WTC11 (cell line): ENCODE measurements at regions of chr9 and their contacts with region 1.

Region 1: GRCh38 chr9:72022841-72023240 is 37.6 kb downstream of the C9orf57 start:
- DNase-seq: no peak
- ATAC-seq: no peak
- H3K4me3 Mint-ChIP-seq: no peak overlapping the region
- H3K27ac Mint-ChIP-seq: no peak overlapping the region
- H3K4me1 Mint-ChIP-seq: peaks cover 12% of the 10 kb centered on the region
- H3K27me3 Mint-ChIP-seq: no peaks in the 10 kb centered on the region
- CTCF ChIP-seq: no peak

Region 2: GRCh38 chr9:71806901-71807307 is 215.9 kb before region 1 on chr9:
- CTCF ChIA-PET with region 1: interaction called, 43 read pairs
- POLR2A ChIA-PET with region 1: interaction called, 3 read pairs
- DNase-seq: peak; percentile 57
- ATAC-seq: peak; percentile 100
- H3K4me3 Mint-ChIP-seq: no peak overlapping the region
- H3K27ac Mint-ChIP-seq: peak overlapping the region; percentile 58
- H3K4me1 Mint-ChIP-seq: peaks cover 17% of the 10 kb centered on the region
- H3K27me3 Mint-ChIP-seq: no peaks in the 10 kb centered on the region
- CTCF ChIP-seq: 0 out of 2 replicates have a peak, but pooled peaks have one; percentile 43

Region 3: DNA sequence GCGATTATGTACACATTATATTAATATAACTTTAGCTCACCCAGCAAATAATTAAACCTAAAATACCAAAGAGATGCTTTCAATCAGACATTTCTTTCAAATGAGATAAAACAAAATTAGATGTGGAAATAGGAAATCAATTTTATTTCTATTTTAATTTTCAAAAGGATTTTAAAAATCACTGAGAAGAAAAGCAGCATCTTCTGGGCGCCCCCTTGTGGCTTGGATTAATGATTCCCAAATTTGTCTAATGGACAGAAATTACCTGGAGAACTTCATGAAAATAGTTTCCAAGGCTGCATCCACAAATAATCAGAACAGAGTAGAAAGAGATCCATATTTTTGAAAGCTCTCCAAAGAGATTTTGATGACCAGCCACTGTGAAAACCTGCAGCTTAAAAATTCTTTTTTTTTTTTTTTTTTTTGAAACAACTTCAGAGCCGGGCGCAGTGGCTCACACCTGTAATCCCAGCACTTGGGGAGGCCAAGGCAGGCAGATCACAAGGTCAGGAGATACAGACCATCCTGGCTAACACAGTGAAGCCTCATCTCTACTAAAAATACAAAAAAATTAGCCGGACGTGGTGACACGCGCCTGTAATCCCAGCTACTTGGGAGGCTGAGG is 203.6 kb before region 1 on chr9:
- CTCF ChIA-PET with region 1: interaction called, 13 read pairs
- POLR2A ChIA-PET with region 1: no interaction called
- DNase-seq: peak; percentile 23
- ATAC-seq: no peak
- H3K4me3 Mint-ChIP-seq: no peak overlapping the region
- H3K27ac Mint-ChIP-seq: no peak overlapping the region
- H3K4me1 Mint-ChIP-seq: peaks cover 44% of the 10 kb centered on the region
- H3K27me3 Mint-ChIP-seq: no peaks in the 10 kb centered on the region
- CTCF ChIP-seq: peak; percentile 66

Region 4: DNA sequence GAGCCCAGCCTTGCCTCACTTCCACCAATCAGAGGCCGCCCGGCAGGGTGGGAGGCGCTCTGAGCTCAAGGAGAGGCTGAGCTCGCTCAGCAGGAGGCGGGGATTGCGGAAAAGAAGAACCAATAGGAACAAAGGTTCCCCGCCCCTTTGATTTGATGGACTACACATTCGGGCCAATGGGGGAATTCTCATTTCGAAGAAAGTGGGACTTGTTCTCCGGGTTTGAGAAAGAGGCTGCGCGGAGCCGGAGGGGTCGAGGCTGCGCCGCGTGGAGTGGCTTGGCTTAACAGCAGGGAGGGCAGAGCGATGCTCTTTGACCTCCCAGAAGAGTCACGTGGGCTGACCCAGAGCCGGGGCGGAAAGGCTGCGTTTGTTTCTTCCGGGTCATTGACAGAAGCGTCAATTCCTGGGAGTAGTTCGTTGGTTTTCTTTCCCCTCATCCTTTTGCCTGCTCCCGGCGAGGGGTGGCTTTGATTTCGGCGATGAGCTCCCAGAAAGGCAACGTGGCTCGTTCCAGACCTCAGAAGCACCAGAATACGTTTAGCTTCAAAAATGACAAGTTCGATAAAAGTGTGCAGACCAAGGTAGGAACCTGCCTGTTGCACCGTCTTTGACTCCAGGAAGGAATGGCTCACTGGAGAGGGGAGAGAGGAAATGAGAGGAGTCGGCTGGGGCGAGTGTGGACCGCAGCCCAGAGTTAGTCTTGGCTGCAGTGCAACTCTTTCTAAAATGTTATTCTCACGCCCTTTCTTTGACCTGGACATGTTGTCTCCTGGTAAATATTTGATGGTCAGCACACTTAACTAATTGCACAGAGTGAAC is 111.4 kb before region 1 on chr9 and contains the start of gene C9orf85:
- CTCF ChIA-PET with region 1: interaction called, 12 read pairs
- POLR2A ChIA-PET with region 1: interaction called, 3 read pairs
- DNase-seq: peak; percentile 100
- ATAC-seq: peak; percentile 95
- H3K4me3 Mint-ChIP-seq: peak within 1 kb of the TSS; percentile 100
- H3K27ac Mint-ChIP-seq: peak within 1 kb of the TSS; percentile 100
- H3K4me1 Mint-ChIP-seq: peaks cover 57% of the 10 kb centered on the region
- H3K27me3 Mint-ChIP-seq: no peaks in the 10 kb centered on the region
- CTCF ChIP-seq: no peak
- total RNA-seq, gene C9orf85: 13.2 to 20.2 TPM (median 15.2 TPM) in 3 replicates

Region 5: DNA sequence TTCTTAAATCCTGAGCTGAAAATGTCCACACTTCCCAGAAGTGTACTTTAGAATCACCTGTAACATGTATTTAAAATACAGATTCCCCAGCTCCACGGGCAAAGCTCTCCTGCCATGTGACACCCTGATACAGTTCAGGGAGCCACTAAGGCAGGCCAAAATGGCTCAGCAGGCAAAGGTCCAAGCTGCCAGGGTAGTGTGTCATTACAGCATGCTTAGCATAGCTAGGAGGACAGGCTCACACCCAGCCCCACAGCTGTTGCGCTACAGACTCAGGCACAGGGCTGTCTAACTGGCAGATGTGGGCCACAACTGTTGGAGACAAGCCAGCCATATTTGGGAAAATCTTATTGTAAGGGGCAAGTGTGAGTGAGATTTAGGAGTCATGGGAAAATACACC is 38.4 kb before region 1 on chr9:
- CTCF ChIA-PET with region 1: interaction called, 58 read pairs
- POLR2A ChIA-PET with region 1: interaction called, 4 read pairs
- DNase-seq: no peak
- ATAC-seq: peak; percentile 21
- H3K4me3 Mint-ChIP-seq: no peak overlapping the region
- H3K27ac Mint-ChIP-seq: peak overlapping the region; percentile 78
- H3K4me1 Mint-ChIP-seq: peaks cover 35% of the 10 kb centered on the region
- H3K27me3 Mint-ChIP-seq: no peaks in the 10 kb centered on the region
- CTCF ChIP-seq: no peak

Region 6: DNA sequence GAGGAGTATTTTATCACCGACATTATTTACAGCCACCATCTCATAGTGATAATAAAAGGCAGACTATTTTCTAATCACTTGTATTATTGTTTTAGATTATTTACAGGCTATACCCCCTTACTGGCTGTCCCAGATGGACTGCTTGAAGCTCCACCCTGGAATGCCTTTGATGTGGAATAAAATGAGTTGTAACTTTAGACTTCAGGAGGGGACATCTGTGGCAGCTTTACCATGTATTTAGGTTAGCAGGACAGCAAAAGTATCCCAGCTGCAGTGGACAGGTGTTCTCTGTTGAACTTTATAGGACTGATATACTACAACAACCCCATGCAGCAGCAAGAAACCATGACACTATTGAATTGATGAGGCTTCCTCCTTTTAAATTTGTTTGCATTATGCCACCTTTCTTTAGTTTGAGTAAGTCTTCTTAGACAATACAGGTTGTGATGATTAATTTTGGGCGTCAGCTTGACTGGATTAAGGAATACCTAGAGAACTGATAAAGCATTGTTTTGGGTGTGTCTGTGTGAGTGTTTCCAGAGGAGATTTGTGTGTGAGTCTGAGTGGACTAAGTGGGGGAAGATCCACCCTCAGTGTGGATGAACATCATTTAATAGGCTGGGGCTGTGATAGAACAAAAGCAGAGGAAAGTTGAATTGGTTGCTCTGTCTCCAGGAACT is 66.8 kb after region 1 on chr9:
- CTCF ChIA-PET with region 1: no interaction called
- POLR2A ChIA-PET with region 1: no interaction called
- DNase-seq: no peak
- ATAC-seq: no peak
- H3K4me3 Mint-ChIP-seq: no peak overlapping the region
- H3K27ac Mint-ChIP-seq: no peak overlapping the region
- H3K4me1 Mint-ChIP-seq: no peaks in the 10 kb centered on the region
- H3K27me3 Mint-ChIP-seq: no peaks in the 10 kb centered on the region
- CTCF ChIP-seq: no peak

Region 7: GRCh38 chr9:72160446-72161123 is 137.7 kb after region 1 on chr9:
- CTCF ChIA-PET with region 1: no interaction called
- POLR2A ChIA-PET with region 1: no interaction called
- DNase-seq: no peak
- ATAC-seq: no peak
- H3K4me3 Mint-ChIP-seq: no peak overlapping the region
- H3K27ac Mint-ChIP-seq: no peak overlapping the region
- H3K4me1 Mint-ChIP-seq: no peaks in the 10 kb centered on the region
- H3K27me3 Mint-ChIP-seq: no peaks in the 10 kb centered on the region
- CTCF ChIP-seq: no peak

Region 8: GRCh38 chr9:72271613-72272478 is 249.0 kb after region 1 on chr9:
- CTCF ChIA-PET with region 1: interaction called, 10 read pairs
- POLR2A ChIA-PET with region 1: no interaction called
- DNase-seq: peak; percentile 43
- ATAC-seq: peak; percentile 57; the same call in 1 of the 2 replicates
- H3K4me3 Mint-ChIP-seq: no peak overlapping the region
- H3K27ac Mint-ChIP-seq: no peak overlapping the region
- H3K4me1 Mint-ChIP-seq: no peaks in the 10 kb centered on the region
- H3K27me3 Mint-ChIP-seq: no peaks in the 10 kb centered on the region
- CTCF ChIP-seq: peak; percentile 80